Right ventricle myocardium inferior (tissue), 1 donor: ENCODE measurements at regions of chr10 and their contacts with region 1.

Region 1: DNA sequence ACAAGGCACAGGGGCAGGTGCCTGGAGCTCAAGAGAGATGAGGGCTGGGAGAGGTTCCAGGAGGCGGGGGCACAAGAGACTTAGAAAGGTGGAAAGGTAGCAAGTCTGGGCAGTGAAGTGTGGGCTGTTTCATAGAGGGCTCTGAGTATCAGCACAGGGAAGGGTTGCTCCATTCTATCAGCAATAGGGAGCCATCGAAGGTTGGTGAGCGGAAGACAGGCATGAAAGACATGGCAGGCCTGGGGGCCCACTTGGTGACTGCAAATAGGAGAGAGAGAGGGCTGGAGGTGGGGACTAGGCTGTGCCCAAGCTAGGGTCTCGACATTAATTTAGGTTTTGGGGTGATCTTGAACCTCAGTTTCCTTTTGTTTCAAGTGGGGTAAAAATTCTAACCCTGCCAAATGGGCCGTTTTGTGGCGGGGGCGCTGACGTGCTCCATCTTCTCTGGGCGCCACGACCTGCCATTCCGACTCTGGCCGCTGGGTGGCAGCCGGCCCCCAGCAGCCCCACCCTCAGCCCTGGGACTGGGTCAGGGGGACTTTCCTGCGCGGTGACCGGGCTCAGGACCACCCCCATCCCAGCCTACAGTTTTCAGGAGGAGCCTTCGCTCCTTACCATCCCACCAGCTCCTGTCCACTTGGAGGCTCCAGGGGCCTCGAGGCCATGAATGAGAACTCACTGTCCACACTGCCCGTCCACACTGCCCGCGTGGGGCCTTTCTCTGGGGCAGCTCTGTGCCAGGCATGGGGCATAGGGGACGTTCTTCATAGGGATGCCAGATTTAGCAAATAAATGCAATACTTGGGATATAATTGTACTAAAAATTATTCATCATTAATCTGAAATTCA is 37.2 kb upstream of the PCBD1 start:
- DNase-seq: peak; percentile 75
- ATAC-seq: peak; percentile 78

Region 2: GRCh38 chr10:71033396-71033980 is 107.9 kb after region 1 on chr10:
- intact Hi-C with region 1: no loop called
- DNase-seq: no peak
- ATAC-seq: no peak

Region 3: DNA sequence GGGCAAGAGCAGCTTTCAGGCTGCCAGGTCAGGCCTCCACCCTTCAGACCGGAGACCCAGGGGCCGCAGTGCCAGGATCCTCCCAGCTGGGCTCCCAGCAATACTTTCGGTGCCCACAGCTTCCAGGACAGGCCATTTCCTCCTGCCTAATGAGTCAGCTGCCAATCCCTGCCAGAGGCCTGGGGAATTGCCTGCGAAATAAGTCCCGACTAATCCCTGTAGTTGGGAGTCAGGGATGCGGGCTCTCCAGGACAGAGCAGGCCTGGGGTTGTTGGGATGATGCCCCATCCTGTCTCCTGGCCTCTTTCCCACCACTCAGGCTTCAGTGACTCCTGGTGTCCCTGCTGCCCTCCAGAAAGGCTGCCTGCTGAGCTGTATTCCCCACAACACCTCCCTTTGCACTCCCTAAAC is 143.3 kb after region 1 on chr10:
- intact Hi-C with region 1: loop called (anchors 5 kb)
- DNase-seq: no peak
- ATAC-seq: peak; percentile 75

Region 4: DNA sequence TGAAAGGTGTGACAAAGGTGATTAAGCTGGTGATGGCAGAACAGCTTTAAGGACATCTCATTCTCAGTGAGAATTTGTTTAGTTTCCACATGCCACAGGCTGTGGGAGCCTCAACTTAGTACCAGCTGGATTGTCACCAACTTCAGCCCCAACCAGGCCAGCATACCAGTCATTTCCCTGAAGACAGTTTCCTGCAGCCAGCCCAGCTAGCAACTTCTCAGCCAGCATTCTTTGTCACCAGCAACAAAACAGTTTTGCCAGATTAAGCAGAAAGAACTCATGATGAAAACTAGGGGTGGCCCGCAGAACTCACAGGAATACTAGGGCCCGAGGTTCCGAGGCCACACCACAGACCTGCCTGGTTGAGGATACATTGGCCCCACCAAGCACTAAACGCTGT is 218.0 kb after region 1 on chr10:
- intact Hi-C with region 1: loop called (anchors 10 kb)
- DNase-seq: no peak
- ATAC-seq: peak; percentile 27

Region 5: GRCh38 chr10:71285180-71285545 is 359.6 kb after region 1 on chr10:
- intact Hi-C with region 1: loop called (anchors 1 kb)
- DNase-seq: peak; percentile 65
- ATAC-seq: peak; percentile 65